ENCODE measurements at regions of chr9 and their contacts with region 1.

Region 1: DNA sequence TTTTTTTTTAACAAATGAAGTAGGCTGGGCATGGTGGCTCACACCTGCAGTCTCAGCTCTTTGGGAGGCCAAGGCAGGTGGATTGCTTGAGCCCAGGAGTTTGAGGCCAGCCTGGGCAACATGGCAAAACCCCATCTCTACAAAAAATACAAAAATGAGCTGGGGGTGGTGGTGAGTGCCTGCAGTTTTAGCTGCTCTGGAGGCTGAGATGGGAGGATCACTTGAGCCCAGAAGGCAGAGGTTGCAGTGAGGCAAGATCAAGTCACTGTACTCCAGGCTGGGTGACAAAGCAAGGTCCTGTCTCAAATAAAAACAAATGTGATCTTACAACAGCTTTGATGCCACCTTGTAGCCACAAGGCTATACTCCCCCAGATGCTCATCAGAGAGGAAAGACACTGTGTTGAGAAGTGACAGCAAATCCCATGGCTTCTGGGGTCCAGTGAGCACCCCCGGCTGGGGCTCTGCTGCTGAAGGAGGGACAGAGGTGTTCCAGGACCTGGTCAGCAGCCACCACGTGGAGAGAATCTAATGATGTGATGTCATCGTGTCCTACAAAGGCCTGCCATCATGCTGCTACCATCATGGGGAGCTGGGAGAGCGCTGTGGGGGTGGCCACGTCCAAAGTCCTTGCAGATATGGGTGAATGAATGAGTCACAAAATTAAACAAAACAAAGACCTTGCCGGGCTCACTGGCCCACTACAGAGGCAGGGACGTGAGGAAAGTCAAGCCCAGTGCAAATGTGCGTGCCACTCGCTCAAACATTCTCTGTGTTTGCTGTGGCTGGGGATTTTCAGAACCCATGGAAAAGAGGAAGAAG is 60.7 kb downstream of the PRRT1B start:
- DNase-seq: no peak
- CTCF ChIP-seq: no peak

Region 2: DNA sequence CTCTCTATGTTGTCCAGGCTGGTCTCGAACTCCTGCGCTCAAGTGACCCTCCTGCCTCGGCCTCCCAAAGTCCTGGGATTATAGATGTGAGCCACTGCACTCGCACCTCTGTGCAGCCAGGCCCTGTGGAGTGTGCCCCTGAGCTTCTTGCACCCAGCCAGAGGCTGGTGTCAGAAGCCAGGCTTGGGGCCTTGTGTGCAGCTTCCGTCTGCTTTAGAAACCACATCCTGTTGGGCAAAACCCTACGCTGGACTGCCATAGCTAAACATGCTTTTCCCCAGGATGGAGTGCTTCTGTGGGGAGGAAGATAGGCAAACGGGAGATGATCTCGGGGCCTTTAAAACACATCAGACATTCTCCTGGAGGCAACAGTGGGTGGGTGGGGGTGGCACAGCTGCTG is 20.6 kb before region 1 on chr9:
- CTCF ChIA-PET with region 1: interaction called, 43 read pairs
- POLR2A ChIA-PET with region 1: interaction called, 10 read pairs
- DNase-seq: no peak
- CTCF ChIP-seq: no peak

Measured in GM10248 (cell line).